ENCODE measurements at regions of chr10 and their contacts with region 1.

Region 1: GRCh38 chr10:69639291-69640195 is 9.5 kb downstream of the FAM241B start:
- DNase-seq: peak in 3 of 4 donors; percentile 51 to 78 (median 54)
- ATAC-seq: peak; percentile 76
- H3K4me3 ChIP-seq: no peak overlapping the region
- H3K27ac ChIP-seq: no peak overlapping the region
- H3K4me1 ChIP-seq: no peaks in the 10 kb centered on the region
- H3K27me3 ChIP-seq: peaks cover 0 to 10% of the 10 kb centered on the region in 2 donors
- CTCF ChIP-seq: peak; percentile 74 to 83

Region 2: GRCh38 chr10:69237528-69238159 is 401.9 kb before region 1 on chr10:
- intact Hi-C with region 1: no loop called
- DNase-seq: peak; percentile 80 to 95 (median 86)
- ATAC-seq: peak; percentile 99
- H3K4me3 ChIP-seq: no peak overlapping the region
- H3K27ac ChIP-seq: no peak overlapping the region
- H3K4me1 ChIP-seq: peaks cover 0 to 20% of the 10 kb centered on the region in 2 donors
- H3K27me3 ChIP-seq: no peaks in the 10 kb centered on the region
- CTCF ChIP-seq: peak; percentile 92 to 93

Region 3: DNA sequence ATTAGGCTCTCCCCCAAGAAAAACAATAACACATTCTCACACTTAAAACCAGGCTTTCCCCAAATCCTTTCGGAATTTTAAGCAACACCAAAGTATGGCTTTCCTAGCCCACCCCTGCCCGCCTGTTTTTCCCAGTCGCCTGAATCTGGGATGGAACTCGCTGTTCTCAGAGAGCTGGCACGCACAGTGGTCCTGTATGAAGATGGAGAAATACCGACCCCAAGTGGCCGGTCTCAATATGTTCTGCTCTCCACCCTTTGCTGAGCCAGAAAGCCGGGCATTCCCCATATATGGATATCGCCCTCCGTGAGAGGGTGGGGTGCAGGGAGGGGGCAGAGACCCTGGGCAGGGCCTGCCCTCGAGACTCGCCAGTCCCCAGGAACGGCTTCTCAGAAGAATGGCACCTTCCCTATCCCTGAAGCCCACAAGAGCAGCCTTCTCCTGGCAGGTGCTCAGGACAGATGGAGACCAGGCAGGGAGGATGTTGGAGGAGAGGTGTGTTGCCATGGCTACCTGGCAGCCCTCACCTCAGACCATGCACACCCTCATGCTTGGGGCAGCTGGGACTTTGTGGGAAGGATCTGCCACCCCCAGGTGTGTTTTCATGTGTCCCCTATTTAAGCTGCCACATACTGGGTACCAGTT is 226.2 kb before region 1 on chr10:
- intact Hi-C with region 1: loop called in 1 of 2 experiments (anchors 10 kb)
- DNase-seq: peak in 2 of 4 donors; percentile 55 to 82
- ATAC-seq: peak; percentile 14
- H3K4me3 ChIP-seq: no peak overlapping the region
- H3K27ac ChIP-seq: no peak overlapping the region
- H3K4me1 ChIP-seq: peaks cover 3 to 17% of the 10 kb centered on the region in 2 donors
- H3K27me3 ChIP-seq: no peaks in the 10 kb centered on the region
- CTCF ChIP-seq: peak; percentile 42 to 50

Region 4: DNA sequence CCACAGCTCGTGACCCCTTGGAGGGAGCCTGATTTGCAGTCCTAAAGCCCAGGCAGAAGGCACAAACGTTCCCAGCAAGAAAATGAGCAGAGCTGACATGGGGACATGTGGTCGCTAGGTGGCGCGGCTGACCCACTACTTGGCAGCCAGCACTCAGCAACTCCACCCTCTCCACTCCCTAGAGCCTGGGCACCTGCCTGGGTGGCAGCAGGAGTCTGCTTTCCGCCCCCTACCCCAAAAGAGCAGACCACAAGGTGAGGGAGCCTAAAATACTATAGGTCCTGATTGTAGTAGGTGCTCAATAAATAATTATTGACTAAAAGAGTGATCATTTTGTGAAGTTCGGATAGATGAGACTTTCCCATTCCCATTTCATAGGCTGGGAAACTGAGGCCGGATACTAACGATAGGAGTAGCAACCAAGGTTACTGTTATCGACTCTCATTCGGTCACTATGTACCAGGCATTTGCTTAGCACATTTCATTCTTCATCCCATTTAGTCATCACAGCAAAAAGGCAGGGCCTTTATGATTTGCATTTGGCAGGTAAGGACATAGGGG is 123.8 kb before region 1 on chr10:
- intact Hi-C with region 1: loop called in 1 of 2 experiments (anchors 2 kb)
- DNase-seq: peak; percentile 42 to 90 (median 66)
- ATAC-seq: peak; percentile 97
- H3K4me3 ChIP-seq: no peak overlapping the region
- H3K27ac ChIP-seq: no peak overlapping the region
- H3K4me1 ChIP-seq: no peaks in the 10 kb centered on the region
- H3K27me3 ChIP-seq: no peaks in the 10 kb centered on the region
- CTCF ChIP-seq: peak; percentile 68 to 76

Region 5: DNA sequence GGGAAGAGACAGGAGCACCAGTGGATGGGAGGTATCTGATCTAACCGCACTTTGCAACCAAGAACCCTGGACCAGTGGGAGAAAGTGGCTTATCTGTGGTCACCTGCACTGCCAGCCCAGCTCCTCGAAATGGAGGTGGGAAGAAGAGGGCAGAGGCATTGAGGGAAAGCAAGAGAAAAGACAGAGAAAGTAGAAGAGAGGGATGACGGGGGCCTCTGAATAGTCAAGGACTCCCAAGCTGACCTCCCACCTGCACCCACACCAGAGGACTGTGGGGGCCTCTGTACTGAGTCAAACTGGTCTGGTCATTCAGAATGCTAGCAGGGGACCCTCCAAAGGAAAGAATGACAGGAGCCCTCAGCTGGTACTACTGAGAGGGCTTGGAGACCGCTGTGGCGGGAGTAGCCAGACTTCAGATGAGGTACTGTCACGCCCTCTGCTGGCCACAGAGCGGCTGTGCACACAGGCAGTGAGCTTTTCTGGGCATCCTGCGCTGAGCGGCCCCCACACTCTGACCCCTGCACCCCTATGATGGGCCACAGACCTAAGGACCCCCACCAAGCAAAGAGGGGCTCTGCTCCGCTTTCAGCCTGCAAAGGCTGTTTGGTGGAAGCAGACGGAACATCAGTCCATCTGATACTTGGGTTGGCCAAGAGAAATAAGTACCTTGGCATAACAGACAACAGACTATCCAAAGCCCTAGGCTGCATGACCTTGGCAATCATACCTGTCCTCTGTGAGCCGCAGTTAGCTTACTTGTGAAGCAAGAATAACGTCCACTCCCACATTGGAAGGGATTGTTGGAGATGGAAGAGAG is 275.1 kb after region 1 on chr10:
- intact Hi-C with region 1: loop called in 1 of 2 experiments (anchors 10 kb)
- DNase-seq: peak in 3 of 4 donors; percentile 62 to 83 (median 63)
- ATAC-seq: peak; percentile 95
- H3K4me3 ChIP-seq: no peak overlapping the region
- H3K27ac ChIP-seq: no peak overlapping the region
- H3K4me1 ChIP-seq: peaks cover 0 to 3% of the 10 kb centered on the region in 2 donors
- H3K27me3 ChIP-seq: peaks cover 0 to 21% of the 10 kb centered on the region in 2 donors
- CTCF ChIP-seq: peak; percentile 83 to 89